ENCODE measurements at regions of chr22 and their contacts with region 1.

Region 1: DNA sequence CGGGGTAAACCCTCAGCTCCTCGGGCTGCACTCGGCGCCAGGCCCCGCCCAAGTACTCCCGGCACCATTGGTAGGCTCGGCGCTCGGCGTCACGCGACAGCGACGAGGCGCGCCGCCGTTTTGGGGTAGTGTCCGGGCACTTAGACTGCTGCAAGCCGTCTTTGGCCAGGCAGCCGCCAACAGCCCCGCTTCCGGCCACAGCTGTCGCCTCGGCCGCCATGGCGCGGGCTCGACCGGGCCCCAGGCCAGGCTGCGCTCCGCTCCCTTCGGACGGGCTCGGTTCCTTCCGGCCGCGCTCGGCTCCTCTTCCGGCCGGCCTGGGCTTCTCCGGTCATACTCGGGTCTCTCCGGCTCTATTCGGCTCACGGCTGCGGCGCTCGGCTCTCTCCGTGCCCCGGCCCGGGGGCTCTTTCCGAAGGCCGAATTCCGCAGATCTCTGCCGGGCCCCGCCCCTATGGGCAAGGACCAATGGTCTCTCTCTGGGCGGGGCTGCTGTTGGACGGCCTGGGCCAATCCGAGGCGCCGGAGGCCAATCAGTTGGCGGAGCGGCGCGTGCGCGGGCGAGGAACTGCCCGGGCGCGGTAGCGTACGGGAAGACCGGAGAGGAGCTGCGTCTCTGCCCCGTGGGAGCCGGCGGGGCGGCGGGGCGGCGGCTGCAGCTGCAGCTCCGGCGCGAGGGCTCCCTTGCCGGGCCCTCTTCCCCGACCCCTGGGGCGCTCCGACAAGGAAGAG is at the start of gene CHKB:
- DNase-seq: peak; percentile 99 to 100 (median 99)
- ATAC-seq: peak; percentile 94 to 97 (median 96)
- H3K4me3 ChIP-seq: peak within 1 kb of the TSS; percentile 56 to 95 (median 80)
- H3K27ac ChIP-seq: peak within 1 kb of the TSS; percentile 90 to 100 (median 99)
- H3K4me1 ChIP-seq: peaks cover 3 to 50% (median 32%) of the 10 kb centered on the region in 12 donors
- H3K27me3 ChIP-seq: no peaks in the 10 kb centered on the region
- CTCF ChIP-seq: no peak
- POLR2A ChIP-seq: peak; percentile 91 to 99
- total RNA-seq, gene CHKB: 23.3 to 54.6 (median 35.6) TPM

Region 2: DNA sequence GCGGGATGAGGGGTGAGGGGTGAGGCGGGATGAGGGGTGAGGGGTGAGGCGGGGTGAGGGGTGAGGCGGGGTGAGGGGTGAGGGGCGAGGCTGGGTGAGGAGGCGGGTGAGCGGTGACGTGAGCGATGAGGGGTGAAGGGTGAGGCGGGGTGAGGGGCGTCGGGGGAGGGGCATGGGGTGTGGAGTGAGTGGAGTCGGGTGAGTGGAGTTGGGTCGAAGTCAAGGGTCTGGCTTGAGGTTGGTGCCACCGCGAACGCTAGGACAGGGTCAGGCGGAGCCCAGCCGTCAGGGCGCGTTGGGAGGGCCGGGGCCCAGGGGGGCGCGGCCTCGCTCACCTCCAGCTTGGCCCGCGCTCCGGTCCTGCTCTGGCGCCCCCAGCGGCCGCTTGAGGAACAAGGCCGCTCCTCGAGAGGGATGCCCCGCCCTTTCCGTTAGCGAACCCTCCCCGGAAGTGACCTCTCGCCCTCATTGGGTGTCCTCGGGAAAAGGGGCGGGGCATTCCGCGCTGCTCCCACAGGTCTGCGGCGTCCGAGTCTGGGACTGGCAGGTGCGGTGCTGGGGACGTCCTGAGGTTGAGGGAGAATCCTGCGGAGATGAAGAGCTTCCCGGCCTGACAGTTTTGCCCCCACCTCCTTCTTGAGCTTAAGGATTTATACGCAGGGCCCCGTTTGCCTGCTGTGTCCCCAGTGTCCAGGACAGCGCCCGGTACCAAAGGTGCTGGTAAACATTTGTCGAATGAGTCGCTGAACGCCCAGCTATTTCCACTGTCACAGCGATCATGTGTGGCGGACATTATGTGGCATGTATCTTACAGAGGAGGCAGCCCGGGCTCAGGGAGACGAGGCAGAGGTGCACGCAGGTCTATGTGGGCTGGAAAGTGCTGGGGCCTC is 20.0 kb before region 1 on chr22 and contains the start of gene SYCE3:
- intact Hi-C with region 1: loop called in 1 of 10 experiments (anchors 1 kb)
- DNase-seq: peak; percentile 97 to 99 (median 98)
- ATAC-seq: peak; percentile 94 to 97 (median 96)
- H3K4me3 ChIP-seq: peak within 1 kb of the TSS; percentile 30 to 97 (median 64)
- H3K27ac ChIP-seq: peak within 1 kb of the TSS; percentile 65 to 96 (median 86)
- H3K4me1 ChIP-seq: peaks cover 0 to 17% (median 7%) of the 10 kb centered on the region in 12 donors
- H3K27me3 ChIP-seq: no peaks in the 10 kb centered on the region
- CTCF ChIP-seq: peak; percentile 92 to 100 (median 98)
- POLR2A ChIP-seq: peak; percentile 51 to 86
- total RNA-seq, gene SYCE3: not detected